Activated T-helper 1 cell treated with anti-CD3 and anti-CD28 coated beads, Interleukin-12 subunit alpha, Interleukin-12 subunit beta, Interleukin-2, Interleukin-4 antibody, amounts not matched to agents 30 ng/mL and 10 ng/mL and 1 ng/mL, durations not matched to agents 14 hours and 24 hours and 36 hours (primary cell): ENCODE measurements at regions of chr5 and their contacts with region 1.

Region 1: DNA sequence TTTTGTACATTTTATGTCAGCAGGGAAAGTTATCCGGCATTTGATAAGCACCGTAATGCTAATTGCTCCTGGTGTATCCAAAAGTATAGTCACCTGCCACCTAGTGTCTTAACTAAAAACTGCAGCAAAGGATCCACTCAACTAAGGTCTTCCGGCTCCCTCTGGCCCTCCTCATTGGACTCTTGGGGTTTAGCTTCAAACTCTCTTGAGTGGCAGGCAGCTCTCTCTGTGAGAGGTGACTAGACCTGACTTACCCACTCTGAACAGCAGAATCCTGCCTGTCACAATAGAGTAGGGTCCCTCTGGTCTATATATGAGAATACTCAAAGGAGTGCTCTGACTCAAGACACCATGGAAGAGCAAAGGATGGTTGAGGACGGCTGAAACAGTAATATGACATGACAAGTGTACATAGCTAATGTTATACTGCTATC is 60.3 kb upstream of the CAST start:
- DNase-seq: peak; percentile 29
- H3K4me3 Mint-ChIP-seq: no peak overlapping the region
- H3K27ac Mint-ChIP-seq: no peak overlapping the region
- H3K4me1 Mint-ChIP-seq: peaks cover 17% of the 10 kb centered on the region
- H3K27me3 Mint-ChIP-seq: peaks cover 13% of the 10 kb centered on the region

Region 2: GRCh38 chr5:95773335-95774059 is 828.3 kb before region 1 on chr5:
- intact Hi-C with region 1: loop called (anchors 10 kb)
- DNase-seq: no peak
- H3K4me3 Mint-ChIP-seq: no peak overlapping the region
- H3K27ac Mint-ChIP-seq: no peak overlapping the region
- H3K4me1 Mint-ChIP-seq: peaks cover 1% of the 10 kb centered on the region
- H3K27me3 Mint-ChIP-seq: peaks cover 12% of the 10 kb centered on the region

Region 3: DNA sequence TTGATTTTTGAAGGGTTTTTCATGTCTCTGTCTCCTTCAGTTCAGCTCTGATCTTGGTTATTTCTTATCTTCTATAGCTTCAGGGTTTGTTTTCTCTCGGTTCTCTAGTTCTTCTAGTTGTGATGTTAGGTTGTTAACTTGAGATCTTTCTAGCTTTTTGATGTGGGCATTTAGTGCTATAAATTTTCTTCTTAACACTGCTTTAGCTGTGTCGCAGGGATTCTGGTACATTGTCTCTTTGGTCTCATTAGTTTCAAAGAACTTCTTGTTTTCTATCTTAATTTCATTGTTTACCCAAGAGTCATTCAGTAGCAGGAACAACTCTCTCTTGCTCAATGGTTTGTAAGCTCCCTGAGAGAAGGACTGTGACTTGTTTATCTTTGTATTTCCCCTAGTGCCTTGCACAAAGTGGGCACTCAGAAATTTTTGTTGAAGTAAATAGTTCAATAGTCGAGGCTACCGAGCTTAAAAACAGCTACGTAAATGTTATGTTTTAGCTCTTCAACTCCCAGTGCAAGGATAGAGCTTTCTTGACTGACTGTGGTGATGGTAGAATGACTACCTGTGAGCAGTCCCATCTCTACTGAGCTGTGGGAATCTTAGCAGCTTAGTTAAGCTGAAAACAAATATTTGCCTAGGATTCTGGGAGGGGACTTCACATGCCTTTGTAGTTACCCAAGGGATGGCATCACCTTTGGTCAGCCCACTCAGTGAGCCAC is 414.4 kb before region 1 on chr5:
- intact Hi-C with region 1: no loop called
- DNase-seq: no peak
- H3K4me3 Mint-ChIP-seq: no peak overlapping the region
- H3K27ac Mint-ChIP-seq: no peak overlapping the region
- H3K4me1 Mint-ChIP-seq: no peaks in the 10 kb centered on the region
- H3K27me3 Mint-ChIP-seq: peaks cover 21% of the 10 kb centered on the region

Region 4: GRCh38 chr5:96344678-96345577 is 256.9 kb before region 1 on chr5:
- intact Hi-C with region 1: loop called (anchors 1 kb)
- DNase-seq: no peak
- H3K4me3 Mint-ChIP-seq: no peak overlapping the region
- H3K27ac Mint-ChIP-seq: peak overlapping the region; percentile 1
- H3K4me1 Mint-ChIP-seq: peaks cover 22% of the 10 kb centered on the region
- H3K27me3 Mint-ChIP-seq: peaks cover 35% of the 10 kb centered on the region

Region 5: GRCh38 chr5:96439477-96440184 is 162.2 kb before region 1 on chr5:
- intact Hi-C with region 1: loop called (anchors 2 kb)
- DNase-seq: no peak
- H3K4me3 Mint-ChIP-seq: no peak overlapping the region
- H3K27ac Mint-ChIP-seq: no peak overlapping the region
- H3K4me1 Mint-ChIP-seq: peaks cover 10% of the 10 kb centered on the region
- H3K27me3 Mint-ChIP-seq: peaks cover 35% of the 10 kb centered on the region